BJ (cell line): ENCODE measurements at regions of chr1 and their contacts with region 1.

Region 1: GRCh38 chr1:9110669-9111356 is 18.1 kb downstream of the GPR157 start:
- DNase-seq: no peak
- H3K4me3 ChIP-seq: no peak overlapping the region
- H3K27me3 ChIP-seq: no peaks in the 10 kb centered on the region
- CTCF ChIP-seq: peak; percentile 94

Region 2: GRCh38 chr1:8754993-8755392 is 355.8 kb before region 1 on chr1:
- CTCF ChIA-PET with region 1: no interaction called
- POLR2A ChIA-PET with region 1: no interaction called
- DNase-seq: no peak
- H3K4me3 ChIP-seq: no peak overlapping the region
- H3K27me3 ChIP-seq: no peaks in the 10 kb centered on the region
- CTCF ChIP-seq: no peak

Region 3: DNA sequence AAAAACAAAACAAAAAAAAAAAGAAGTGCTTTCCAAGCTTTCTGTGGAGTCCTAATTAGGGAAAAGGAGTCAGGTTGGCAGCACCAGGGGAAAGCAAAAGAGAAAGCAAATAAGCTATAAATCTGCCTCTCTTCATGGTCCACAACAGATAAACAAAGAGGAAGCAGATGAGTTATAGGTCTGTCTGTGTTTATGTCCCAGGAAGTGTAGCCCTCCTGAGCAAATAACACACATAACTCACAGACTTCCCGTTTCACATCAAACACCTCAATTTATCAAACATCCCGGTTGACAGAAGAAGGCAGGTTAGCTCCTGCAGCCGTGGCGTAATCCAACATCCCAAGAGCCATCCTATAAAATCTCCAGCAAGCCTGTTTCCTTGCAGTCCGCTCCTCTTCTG is 35.8 kb before region 1 on chr1:
- CTCF ChIA-PET with region 1: no interaction called
- POLR2A ChIA-PET with region 1: no interaction called
- DNase-seq: no peak
- H3K4me3 ChIP-seq: no peak overlapping the region
- H3K27me3 ChIP-seq: peaks cover 3% of the 10 kb centered on the region
- CTCF ChIP-seq: no peak

Region 4: DNA sequence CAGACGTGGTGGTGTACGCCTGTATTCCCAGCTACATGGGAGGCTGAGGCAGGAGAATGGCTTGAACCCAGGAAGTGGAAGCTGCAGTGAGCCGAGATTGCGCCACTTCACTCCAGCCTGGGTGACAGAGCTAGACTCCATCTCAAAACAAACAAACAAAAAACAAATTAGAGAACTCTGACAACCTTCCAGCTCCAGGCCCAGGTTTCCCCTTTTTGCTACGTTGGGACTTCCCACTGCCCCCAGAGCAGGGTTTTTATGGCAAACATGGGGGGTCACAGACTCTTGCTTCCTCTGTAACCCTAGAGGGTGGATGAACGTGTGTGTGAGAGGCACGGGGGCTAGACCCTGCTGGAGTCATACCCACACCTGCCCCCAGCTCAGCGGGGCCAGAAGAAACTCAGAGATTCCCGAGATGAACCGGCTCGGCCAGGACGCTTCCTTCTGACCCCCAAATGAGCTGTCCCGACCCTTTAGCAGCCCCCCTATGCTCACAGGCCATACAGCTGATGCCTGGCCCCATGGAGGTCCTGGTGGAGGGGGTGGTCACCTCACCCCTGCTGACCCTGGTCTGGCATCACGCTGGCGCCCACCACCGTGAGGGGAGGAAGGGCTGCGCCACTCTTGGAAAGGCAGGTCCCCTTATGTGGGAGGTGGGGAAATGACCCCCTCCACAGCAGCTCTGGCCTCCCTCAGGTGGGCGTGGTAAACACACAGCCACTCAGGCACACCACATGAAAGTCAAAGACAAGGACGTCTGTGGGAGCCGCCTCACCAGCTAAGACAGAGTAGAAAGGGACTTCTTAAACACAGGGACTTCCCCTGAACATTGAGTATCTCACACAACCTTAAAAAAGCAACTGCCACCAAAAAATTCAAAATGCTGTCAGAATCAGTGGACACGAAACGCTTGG is 10.9 kb after region 1 on chr1:
- CTCF ChIA-PET with region 1: interaction called, 23 read pairs
- POLR2A ChIA-PET with region 1: no interaction called
- DNase-seq: no peak
- H3K4me3 ChIP-seq: no peak overlapping the region
- H3K27me3 ChIP-seq: no peaks in the 10 kb centered on the region
- CTCF ChIP-seq: no peak

Region 5: DNA sequence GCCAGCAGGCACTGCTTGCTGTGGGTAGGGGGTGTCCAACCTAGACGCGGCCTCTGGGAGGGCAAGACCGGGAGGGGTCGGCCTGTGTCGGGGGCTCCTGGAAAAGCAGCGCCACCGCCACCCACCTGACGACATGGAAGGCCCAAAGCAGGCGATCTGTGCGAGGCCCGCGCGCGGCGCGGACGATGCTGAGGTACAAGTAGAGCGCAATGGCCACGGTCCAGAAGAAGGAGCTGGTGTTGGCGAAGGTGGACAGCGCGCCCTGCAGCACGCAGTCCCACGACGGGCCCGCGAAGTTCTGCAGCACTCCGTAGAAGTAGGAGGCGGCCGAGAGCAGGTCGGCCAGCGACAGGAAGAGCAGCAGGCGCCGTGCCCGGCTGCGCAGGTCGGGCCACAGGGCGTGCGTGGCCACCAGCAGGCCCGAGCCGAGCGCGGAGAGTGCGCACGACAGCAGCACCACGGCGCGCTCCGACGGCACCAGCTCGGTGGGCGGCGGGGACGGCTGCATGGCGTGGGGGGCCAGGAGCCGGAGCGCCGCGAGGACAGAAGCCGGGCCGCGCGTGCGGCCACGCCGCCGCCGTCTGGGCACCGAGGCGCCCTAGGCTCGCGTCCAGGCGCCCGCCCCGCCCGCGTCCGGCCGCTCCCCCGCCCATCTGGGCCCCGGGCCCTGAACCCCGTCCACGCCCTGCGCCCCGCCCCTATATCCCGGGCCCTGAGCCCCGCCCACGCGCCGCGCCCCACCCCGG is 17.9 kb after region 1 on chr1 and contains the start of gene GPR157:
- CTCF ChIA-PET with region 1: interaction called, 16 read pairs
- POLR2A ChIA-PET with region 1: no interaction called
- DNase-seq: no peak
- H3K4me3 ChIP-seq: peak within 1 kb of the TSS; percentile 46
- H3K27me3 ChIP-seq: no peaks in the 10 kb centered on the region
- CTCF ChIP-seq: 0 out of 2 replicates have a peak, but pooled peaks have one; percentile 20
- polyA plus RNA-seq, gene GPR157: 1.9 and 2.5 TPM in 2 replicates

Region 6: DNA sequence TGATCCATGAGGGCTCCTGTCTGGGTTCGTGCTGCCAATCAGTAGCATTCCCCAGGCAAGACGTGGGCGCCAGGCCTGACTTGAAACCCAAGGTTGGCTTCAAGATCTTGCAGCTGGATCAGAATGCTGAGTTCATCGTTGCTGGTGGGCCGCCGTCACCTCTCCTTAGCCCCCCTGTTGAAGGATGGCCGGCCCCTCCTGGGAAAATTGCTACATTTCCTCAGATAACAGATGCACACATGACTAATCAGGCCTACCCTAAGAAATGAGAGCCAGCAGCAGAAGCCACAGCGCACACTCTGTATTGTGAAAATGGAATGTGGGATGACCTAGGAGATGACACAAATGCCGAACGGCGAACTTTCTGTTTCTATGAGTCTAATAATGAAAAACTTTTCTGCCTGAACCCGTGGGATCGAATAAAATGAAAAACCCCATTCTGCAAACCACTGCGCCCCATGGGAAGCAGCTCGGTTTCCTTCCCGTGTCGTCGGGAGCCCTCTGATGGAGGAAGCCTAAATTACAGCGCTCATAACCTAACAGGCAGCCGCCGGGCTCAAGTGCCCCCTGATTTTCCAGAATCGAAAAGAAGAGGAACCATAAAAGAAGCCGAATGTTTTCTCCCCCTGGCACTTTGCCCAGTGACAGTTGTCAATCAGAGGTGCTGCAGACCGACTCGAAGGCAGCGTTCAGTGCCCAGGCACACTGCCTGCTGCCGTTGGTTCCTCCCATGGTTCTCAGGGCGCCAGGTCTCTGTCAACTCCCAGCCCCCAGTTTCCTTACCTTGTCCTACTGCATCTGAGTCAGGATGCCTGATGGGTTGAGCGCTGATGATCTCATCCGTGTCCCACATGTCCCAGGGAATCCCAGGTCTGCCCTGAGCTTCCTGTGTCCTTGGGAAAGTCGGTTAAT is 85.6 kb after region 1 on chr1:
- CTCF ChIA-PET with region 1: interaction called, 30 read pairs
- POLR2A ChIA-PET with region 1: no interaction called
- DNase-seq: no peak
- H3K4me3 ChIP-seq: no peak overlapping the region
- H3K27me3 ChIP-seq: peaks cover 3% of the 10 kb centered on the region
- CTCF ChIP-seq: peak; percentile 79

Region 7: DNA sequence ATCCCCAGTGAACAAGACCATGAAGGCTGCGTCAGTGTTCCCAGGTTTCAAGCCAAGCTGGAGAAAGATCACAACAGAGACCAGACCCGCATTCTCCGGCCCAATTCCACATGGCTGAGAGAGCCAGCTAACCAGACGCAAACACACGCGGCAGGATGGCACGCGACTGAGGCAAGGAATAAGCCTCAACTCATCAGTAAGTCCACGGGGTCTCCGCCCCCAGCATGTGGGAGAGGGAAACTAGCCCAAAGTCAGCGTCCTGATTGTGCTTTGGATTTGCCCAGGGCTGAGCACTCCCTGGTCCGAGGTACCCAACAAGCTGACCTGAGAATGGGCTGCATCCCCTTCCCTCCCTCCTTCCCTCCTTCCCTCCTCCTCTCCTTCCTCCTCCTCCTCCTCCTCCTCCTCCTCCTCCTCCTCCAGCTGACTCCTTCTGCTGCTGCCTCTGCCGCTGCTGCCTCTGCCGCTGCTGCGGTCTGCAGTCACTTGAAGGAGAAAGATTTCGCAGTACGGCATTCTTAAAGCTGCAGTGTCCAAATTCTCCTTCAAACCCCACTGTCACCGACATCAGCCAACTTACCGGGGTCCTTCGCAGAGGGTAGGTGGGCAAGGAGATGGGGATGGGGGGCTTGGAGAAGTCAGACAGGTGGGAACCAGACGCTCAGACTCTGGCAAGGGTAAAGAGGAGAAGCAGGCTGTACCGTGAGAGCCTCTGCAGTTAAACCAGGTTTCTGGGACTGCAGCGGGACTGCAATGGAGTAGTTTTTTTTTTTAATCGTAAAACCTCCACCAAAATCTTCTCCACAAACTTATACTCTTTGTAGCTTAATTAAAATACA is 90.8 kb after region 1 on chr1:
- CTCF ChIA-PET with region 1: interaction called, 30 read pairs
- POLR2A ChIA-PET with region 1: no interaction called
- DNase-seq: no peak
- H3K4me3 ChIP-seq: peak overlapping the region; percentile 55
- H3K27me3 ChIP-seq: peaks cover 6% of the 10 kb centered on the region
- CTCF ChIP-seq: no peak

Region 8: GRCh38 chr1:9234223-9235095 is 123.6 kb after region 1 on chr1 and contains the start of gene H6PD:
- CTCF ChIA-PET with region 1: interaction called, 16 read pairs
- POLR2A ChIA-PET with region 1: no interaction called
- DNase-seq: no peak
- H3K4me3 ChIP-seq: peak within 1 kb of the TSS; percentile 62
- H3K27me3 ChIP-seq: no peaks in the 10 kb centered on the region
- CTCF ChIP-seq: peak; percentile 79
- polyA plus RNA-seq, gene H6PD: 12.0 and 16.6 TPM in 2 replicates